Activated CD4-positive, alpha-beta T cell treated with anti-CD3 and anti-CD28 coated beads, Interleukin-2, amount 10 ng/mL, durations not matched to agents 7 days and 5 days (primary cell): ENCODE measurements at regions of chr17 and their contacts with region 1.

Region 1: DNA sequence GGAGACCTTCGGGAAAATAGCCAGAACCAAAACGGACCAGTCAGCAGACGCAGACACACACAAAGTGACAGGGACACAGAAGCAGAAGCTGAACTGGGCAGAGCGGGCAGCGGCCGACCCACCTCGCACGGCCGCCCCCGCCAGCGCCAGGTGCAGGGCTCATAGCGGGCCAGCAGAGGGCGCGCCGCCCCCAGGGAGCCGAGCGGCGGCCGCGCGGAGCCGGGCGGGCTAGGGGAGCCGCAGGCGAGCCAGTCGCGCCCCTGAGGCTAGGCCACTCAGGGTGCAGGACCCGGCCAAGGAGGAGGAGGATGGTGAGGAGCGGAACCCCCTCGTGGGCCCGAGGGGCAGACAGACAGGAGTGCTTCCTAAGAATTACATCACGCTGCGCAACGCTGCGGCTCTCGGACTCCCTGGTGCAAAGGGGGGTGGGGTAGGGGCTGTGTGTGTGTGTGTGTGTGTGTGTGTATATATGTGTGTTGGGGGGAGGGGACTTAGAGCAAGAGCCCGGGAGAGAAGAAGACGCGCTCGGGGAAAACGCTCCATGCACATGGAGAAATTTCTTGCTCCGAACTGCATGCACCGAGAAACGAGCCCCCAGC is 913 bp upstream of the NOG start:
- DNase-seq: peak; percentile 51
- H3K4me3 Mint-ChIP-seq: peak overlapping the region; percentile 64
- H3K27ac Mint-ChIP-seq: no peak overlapping the region
- H3K4me1 Mint-ChIP-seq: peaks cover 21% of the 10 kb centered on the region
- H3K27me3 Mint-ChIP-seq: peaks cover 51% of the 10 kb centered on the region

Region 2: GRCh38 chr17:56521104-56521777 is 71.3 kb before region 1 on chr17:
- CTCF ChIA-PET with region 1: no interaction called
- POLR2A ChIA-PET with region 1: no interaction called
- DNase-seq: no peak
- H3K4me3 Mint-ChIP-seq: no peak overlapping the region
- H3K27ac Mint-ChIP-seq: no peak overlapping the region
- H3K4me1 Mint-ChIP-seq: no peaks in the 10 kb centered on the region
- H3K27me3 Mint-ChIP-seq: peaks cover 12% of the 10 kb centered on the region

Region 3: GRCh38 chr17:56715613-56716357 is 123.2 kb after region 1 on chr17:
- CTCF ChIA-PET with region 1: interaction called, 19 read pairs
- POLR2A ChIA-PET with region 1: no interaction called
- DNase-seq: peak; percentile 81
- H3K4me3 Mint-ChIP-seq: no peak overlapping the region
- H3K27ac Mint-ChIP-seq: no peak overlapping the region
- H3K4me1 Mint-ChIP-seq: peaks cover 21% of the 10 kb centered on the region
- H3K27me3 Mint-ChIP-seq: peaks cover 4% of the 10 kb centered on the region